Activated naive CD4-positive, alpha-beta T cell treated with anti-CD3 and anti-CD28 coated beads for 36 hours (primary cell): ENCODE measurements at regions of chr3 and their contacts with region 1.

Region 1: GRCh38 chr3:178392511-178392926 is 143.7 kb upstream of the KCNMB2 start:
- DNase-seq: no peak
- H3K4me3 Mint-ChIP-seq: no peak overlapping the region
- H3K27ac Mint-ChIP-seq: no peak overlapping the region
- H3K4me1 Mint-ChIP-seq: peaks cover 2% of the 10 kb centered on the region
- H3K27me3 Mint-ChIP-seq: peaks cover 4% of the 10 kb centered on the region

Region 2: GRCh38 chr3:178420033-178420432 is 27.5 kb after region 1 on chr3:
- CTCF ChIA-PET with region 1: no interaction called
- intact Hi-C with region 1: loop called (anchors 1 kb)
- DNase-seq: no peak
- H3K4me3 Mint-ChIP-seq: no peak overlapping the region
- H3K27ac Mint-ChIP-seq: no peak overlapping the region
- H3K4me1 Mint-ChIP-seq: no peaks in the 10 kb centered on the region
- H3K27me3 Mint-ChIP-seq: peaks cover 2% of the 10 kb centered on the region